Motor neuron (in vitro differentiated cells): ENCODE measurements at regions of chrX and their contacts with region 1.

Region 1: DNA sequence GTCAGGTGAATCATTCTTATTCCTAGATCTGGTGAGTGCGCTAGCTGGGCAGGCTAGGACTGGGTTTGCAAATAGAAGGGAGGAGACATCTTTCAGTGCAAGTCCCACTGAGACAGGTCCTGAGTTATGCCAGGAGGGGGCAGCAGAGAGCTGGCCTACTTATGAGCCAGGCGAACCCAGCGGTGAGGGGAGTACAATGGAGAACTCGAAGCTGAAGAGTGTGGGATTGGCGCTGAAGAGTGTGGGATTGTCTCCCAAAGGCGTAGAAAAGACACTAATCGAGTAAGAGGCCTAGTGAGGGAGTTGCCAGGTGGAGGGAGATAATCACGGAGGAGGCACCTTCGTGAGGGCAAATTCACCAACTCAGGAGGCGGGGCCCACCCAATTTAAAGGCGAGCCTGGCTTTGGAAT is 91.7 kb upstream of the CXorf66 start:
- ATAC-seq: peak; percentile 95 to 100 (median 96)
- H3K4me3 ChIP-seq: no peak overlapping the region
- H3K27ac ChIP-seq: no peak overlapping the region
- H3K4me1 ChIP-seq: peaks cover 10 to 15% of the 10 kb centered on the region in 2 donors

Region 2: GRCh38 chrX:140503714-140504351 is 446.8 kb after region 1 on chrX:
- in situ Hi-C with region 1: loop called in 3 of 9 experiments (anchors 25 kb)
- ATAC-seq: peak; percentile 32 to 78 (median 52)
- H3K4me3 ChIP-seq: peak overlapping the region; percentile 42 to 82 (median 50)
- H3K27ac ChIP-seq: peak overlapping the region; percentile 61 to 81
- H3K4me1 ChIP-seq: peaks cover 11 to 12% of the 10 kb centered on the region in 2 donors